ENCODE measurements at regions of chr2 and their contacts with region 1.

Region 1: GRCh38 chr2:10302479-10303180 is at the start of gene HPCAL1:
- DNase-seq: peak; percentile 54 to 90 (median 80)
- ATAC-seq: peak; percentile 67
- H3K4me3 ChIP-seq: peak within 1 kb of the TSS; percentile 84 to 86
- H3K4me3 Mint-ChIP-seq: peak within 1 kb of the TSS; percentile 98
- H3K27ac ChIP-seq: peak within 1 kb of the TSS; percentile 52 to 73
- H3K27ac Mint-ChIP-seq: peak within 1 kb of the TSS; percentile 92
- H3K4me1 ChIP-seq: peaks cover 60% of the 10 kb centered on the region
- H3K4me1 Mint-ChIP-seq: peaks cover 70% of the 10 kb centered on the region
- H3K27me3 ChIP-seq: no peaks in the 10 kb centered on the region
- H3K27me3 Mint-ChIP-seq: no peaks in the 10 kb centered on the region
- CTCF ChIP-seq: peak; percentile 61
- total RNA-seq, gene HPCAL1: 25.0 to 25.6 TPM

Region 2: DNA sequence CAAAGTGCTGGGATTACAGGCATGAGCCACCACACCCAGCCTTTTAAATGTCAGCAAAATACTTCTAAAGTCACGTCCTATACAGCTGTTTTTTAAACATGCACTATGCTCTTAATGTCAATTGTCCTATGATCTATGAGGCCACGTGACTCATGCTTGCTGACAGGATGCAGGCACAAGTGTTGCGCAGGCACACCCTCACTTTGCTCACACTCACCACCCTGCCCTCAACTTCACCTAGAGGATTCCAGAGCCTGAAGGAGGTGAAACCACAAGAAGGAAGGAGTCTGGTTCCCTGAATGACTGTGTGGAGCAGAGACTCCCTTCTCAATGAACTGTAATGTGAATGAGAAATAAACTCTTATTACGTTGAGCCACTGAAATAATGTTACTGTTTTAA is 1396.4 kb before region 1 on chr2:
- CTCF ChIA-PET with region 1: no interaction called
- POLR2A ChIA-PET with region 1: no interaction called
- intact Hi-C with region 1: no loop called
- DNase-seq: no peak
- ATAC-seq: no peak
- H3K4me3 ChIP-seq: no peak overlapping the region
- H3K4me3 Mint-ChIP-seq: no peak overlapping the region
- H3K27ac ChIP-seq: no peak overlapping the region
- H3K27ac Mint-ChIP-seq: no peak overlapping the region
- H3K4me1 ChIP-seq: no peaks in the 10 kb centered on the region
- H3K4me1 Mint-ChIP-seq: no peaks in the 10 kb centered on the region
- H3K27me3 ChIP-seq: no peaks in the 10 kb centered on the region
- H3K27me3 Mint-ChIP-seq: peaks cover 3% of the 10 kb centered on the region
- CTCF ChIP-seq: no peak

Region 3: GRCh38 chr2:10331027-10331701 is 28.5 kb after region 1 on chr2:
- CTCF ChIA-PET with region 1: interaction called, 90 read pairs
- POLR2A ChIA-PET with region 1: interaction called, 94 read pairs
- intact Hi-C with region 1: loop called (anchors 1 kb)
- DNase-seq: peak; percentile 34 to 85 (median 76)
- ATAC-seq: peak; percentile 56
- H3K4me3 ChIP-seq: peak overlapping the region; percentile 56 to 80
- H3K4me3 Mint-ChIP-seq: peak overlapping the region; percentile 92
- H3K27ac ChIP-seq: peak overlapping the region; percentile 57 to 82
- H3K27ac Mint-ChIP-seq: peak overlapping the region; percentile 97
- H3K4me1 ChIP-seq: peaks cover 75% of the 10 kb centered on the region
- H3K4me1 Mint-ChIP-seq: peaks cover 86% of the 10 kb centered on the region
- H3K27me3 ChIP-seq: no peaks in the 10 kb centered on the region
- H3K27me3 Mint-ChIP-seq: no peaks in the 10 kb centered on the region
- CTCF ChIP-seq: no peak

Region 4: DNA sequence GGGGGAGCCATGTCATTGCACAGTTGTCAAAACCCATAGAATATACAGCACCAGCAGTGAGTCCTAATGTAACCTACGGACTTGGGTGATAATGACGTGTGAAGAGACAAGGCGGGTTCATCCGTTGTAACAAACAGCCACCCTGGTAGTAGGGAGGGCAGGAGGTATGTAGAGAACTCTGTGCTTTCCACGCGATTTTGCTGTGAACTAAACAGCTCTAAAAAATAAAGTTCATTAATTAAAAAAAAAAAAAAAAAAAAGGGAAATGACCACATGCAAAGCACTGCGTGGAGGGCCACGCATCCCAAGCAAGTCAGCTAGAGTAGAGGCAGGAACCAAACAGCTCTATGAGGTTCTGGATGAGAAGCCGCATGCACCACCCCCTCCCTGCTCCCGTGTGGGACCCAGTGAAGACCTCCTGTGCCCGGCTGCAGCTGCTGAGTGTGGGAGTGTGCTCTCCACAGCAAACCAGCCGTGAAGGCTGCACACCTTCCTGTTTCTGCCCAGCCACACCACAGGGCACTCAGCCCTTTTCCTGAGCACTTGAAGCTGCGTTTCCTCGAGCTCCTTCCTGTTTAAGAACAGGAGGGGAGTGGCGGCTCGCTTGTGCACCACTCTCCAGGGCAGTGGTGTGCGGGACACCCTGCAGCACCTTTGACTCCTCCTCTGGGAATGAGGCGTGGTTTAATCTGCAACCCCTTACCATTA is 79.9 kb after region 1 on chr2:
- CTCF ChIA-PET with region 1: interaction called, 11 read pairs
- POLR2A ChIA-PET with region 1: interaction called, 23 read pairs
- intact Hi-C with region 1: loop called (anchors 2 kb)
- DNase-seq: peak; percentile 16 to 89 (median 50)
- ATAC-seq: peak; percentile 92
- H3K4me3 ChIP-seq: peak overlapping the region; percentile 47 to 52
- H3K4me3 Mint-ChIP-seq: peak overlapping the region; percentile 58
- H3K27ac ChIP-seq: peak overlapping the region; percentile 41 to 73
- H3K27ac Mint-ChIP-seq: peak overlapping the region; percentile 91
- H3K4me1 ChIP-seq: peaks cover 97% of the 10 kb centered on the region
- H3K4me1 Mint-ChIP-seq: peaks cover 94% of the 10 kb centered on the region
- H3K27me3 ChIP-seq: no peaks in the 10 kb centered on the region
- H3K27me3 Mint-ChIP-seq: no peaks in the 10 kb centered on the region
- CTCF ChIP-seq: no peak

Region 5: DNA sequence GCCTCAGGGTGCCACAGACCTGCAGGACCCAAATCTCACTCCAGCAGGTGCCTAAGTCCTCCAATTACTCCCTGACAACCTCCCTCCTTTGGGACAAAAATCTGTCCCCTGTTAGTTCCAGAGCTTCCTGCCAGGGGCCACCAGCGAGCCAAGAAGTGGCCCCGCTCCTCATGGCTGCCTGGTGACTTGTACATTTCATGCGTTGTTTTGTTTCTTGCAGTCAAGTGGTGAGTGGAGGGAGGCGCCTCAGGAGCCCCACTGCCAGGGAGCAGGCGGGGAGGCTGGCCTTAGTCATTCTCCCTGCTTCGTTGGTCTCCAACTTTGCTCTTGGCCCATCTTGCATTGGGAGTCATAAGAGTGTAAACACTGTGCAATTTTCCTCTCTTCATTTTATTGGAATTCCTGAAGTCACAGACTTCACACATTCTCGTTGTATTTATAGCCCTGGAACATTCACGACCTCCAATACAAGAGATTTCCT is 690.4 kb after region 1 on chr2:
- CTCF ChIA-PET with region 1: no interaction called
- POLR2A ChIA-PET with region 1: no interaction called
- intact Hi-C with region 1: no loop called
- DNase-seq: no peak
- ATAC-seq: no peak
- H3K4me3 ChIP-seq: no peak overlapping the region
- H3K4me3 Mint-ChIP-seq: no peak overlapping the region
- H3K27ac ChIP-seq: no peak overlapping the region
- H3K27ac Mint-ChIP-seq: no peak overlapping the region
- H3K4me1 ChIP-seq: no peaks in the 10 kb centered on the region
- H3K4me1 Mint-ChIP-seq: no peaks in the 10 kb centered on the region
- H3K27me3 ChIP-seq: no peaks in the 10 kb centered on the region
- H3K27me3 Mint-ChIP-seq: peaks cover 5% of the 10 kb centered on the region
- CTCF ChIP-seq: no peak

Measured in CD8-positive, alpha-beta T cell (primary cell).